OCI-LY7 (cell line): ENCODE measurements at regions of chr10 and their contacts with region 1.

Region 1: GRCh38 chr10:71212318-71213126 is at the start of gene UNC5B:
- DNase-seq: peak; percentile 80
- H3K4me3 ChIP-seq: peak within 1 kb of the TSS; percentile 52
- H3K27ac ChIP-seq: no peak within 1 kb of the TSS
- H3K4me1 ChIP-seq: peaks cover 13% of the 10 kb centered on the region
- CTCF ChIP-seq: peak; percentile 48
- total RNA-seq, gene UNC5B: not detected in 2 replicates

Region 2: DNA sequence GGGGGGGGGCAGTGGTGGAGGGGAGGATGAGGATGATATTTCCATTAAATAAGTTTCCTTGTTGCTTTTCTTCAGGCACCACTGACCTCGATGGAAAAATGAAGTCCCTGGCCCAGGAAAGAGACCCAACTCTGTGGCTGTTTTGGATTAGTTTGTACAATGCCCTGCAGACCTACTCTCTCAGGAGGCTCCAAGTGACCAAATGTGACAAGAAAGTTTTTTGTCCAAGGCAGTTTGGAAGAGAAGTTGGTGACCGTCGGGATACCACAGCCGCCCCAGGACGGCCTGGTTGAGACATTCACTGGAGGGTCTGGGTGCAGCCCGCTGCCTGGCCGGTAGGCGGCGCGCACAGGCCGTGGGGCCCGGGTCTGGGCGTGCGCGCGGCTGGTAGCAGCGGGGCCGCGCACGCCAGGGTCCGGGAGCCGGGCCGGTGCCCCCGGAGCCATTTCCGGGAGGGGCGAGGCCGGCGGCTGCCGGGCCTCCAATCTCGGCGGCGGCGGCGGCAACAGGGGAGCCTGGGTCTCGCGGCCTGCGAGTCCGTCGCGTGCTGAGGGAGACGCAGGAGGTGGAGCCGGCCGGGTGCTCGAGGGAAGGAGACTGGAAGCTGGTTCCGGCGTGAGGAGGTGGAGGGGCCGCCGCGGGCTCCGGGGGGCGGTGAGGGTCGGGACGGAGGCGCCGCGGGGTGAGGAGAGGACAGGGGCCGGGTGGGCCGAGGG is 396.9 kb before region 1 on chr10 and contains the start of gene SGPL1:
- CTCF ChIA-PET with region 1: no interaction called
- POLR2A ChIA-PET with region 1: no interaction called
- intact Hi-C with region 1: loop called (anchors 5 kb)
- DNase-seq: peak; percentile 90
- H3K4me3 ChIP-seq: peak within 1 kb of the TSS; percentile 78
- H3K27ac ChIP-seq: no peak within 1 kb of the TSS
- H3K4me1 ChIP-seq: peaks cover 4% of the 10 kb centered on the region
- CTCF ChIP-seq: peak; percentile 92
- total RNA-seq, gene SGPL1: 11.7 and 14.2 TPM in 2 replicates

Region 3: DNA sequence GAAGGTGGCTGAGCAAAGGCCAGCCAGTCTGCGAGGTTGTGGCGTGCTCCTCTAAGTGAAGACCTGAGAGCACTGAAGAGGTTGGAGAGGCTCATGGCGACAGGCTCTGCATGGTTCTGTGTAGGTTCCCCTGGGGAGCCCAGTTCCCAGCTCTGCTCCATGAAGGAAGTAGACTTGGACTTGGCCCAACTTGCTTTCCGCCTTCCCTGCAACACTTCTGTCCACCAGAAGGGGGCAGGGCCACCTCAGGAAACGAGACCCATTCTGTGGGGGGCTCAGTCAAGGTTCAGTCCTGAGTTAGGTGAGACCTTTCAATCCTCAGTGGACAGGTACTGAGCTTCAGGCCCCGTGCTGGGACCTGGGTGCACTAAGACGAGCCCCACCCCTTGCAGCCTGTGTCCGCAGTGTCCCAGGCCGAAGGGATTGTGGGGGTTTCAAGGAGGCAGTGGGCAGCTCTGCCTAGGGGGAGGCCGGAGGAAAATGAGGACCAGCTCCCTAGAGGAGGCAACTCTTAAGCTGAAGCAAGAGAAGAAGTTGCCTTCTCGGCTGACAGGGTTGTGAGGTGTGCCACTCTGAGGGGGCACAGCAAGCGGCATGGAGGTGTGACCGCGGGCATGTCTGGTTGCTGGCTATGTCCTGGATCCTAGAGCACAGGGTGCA is 309.1 kb before region 1 on chr10:
- CTCF ChIA-PET with region 1: no interaction called
- POLR2A ChIA-PET with region 1: no interaction called
- intact Hi-C with region 1: loop called (anchors 5 kb)
- DNase-seq: peak; percentile 43
- H3K4me3 ChIP-seq: no peak overlapping the region
- H3K27ac ChIP-seq: no peak overlapping the region
- H3K4me1 ChIP-seq: no peaks in the 10 kb centered on the region
- CTCF ChIP-seq: peak; percentile 90

Region 4: GRCh38 chr10:70925377-70926225 is 286.9 kb before region 1 on chr10:
- CTCF ChIA-PET with region 1: no interaction called
- POLR2A ChIA-PET with region 1: no interaction called
- intact Hi-C with region 1: loop called (anchors 5 kb)
- DNase-seq: peak; percentile 38
- H3K4me3 ChIP-seq: no peak overlapping the region
- H3K27ac ChIP-seq: no peak overlapping the region
- H3K4me1 ChIP-seq: no peaks in the 10 kb centered on the region
- CTCF ChIP-seq: peak; percentile 89

Region 5: GRCh38 chr10:71124921-71125748 is 87.4 kb before region 1 on chr10:
- CTCF ChIA-PET with region 1: no interaction called
- POLR2A ChIA-PET with region 1: no interaction called
- intact Hi-C with region 1: no loop called
- DNase-seq: no peak
- H3K4me3 ChIP-seq: no peak overlapping the region
- H3K27ac ChIP-seq: no peak overlapping the region
- H3K4me1 ChIP-seq: no peaks in the 10 kb centered on the region
- CTCF ChIP-seq: no peak

Region 6: GRCh38 chr10:71272122-71272771 is 59.7 kb after region 1 on chr10:
- CTCF ChIA-PET with region 1: no interaction called
- POLR2A ChIA-PET with region 1: no interaction called
- intact Hi-C with region 1: no loop called
- DNase-seq: no peak
- H3K4me3 ChIP-seq: no peak overlapping the region
- H3K27ac ChIP-seq: no peak overlapping the region
- H3K4me1 ChIP-seq: no peaks in the 10 kb centered on the region
- CTCF ChIP-seq: no peak